ENCODE measurements at regions of chr3 and their contacts with region 1.

Region 1: DNA sequence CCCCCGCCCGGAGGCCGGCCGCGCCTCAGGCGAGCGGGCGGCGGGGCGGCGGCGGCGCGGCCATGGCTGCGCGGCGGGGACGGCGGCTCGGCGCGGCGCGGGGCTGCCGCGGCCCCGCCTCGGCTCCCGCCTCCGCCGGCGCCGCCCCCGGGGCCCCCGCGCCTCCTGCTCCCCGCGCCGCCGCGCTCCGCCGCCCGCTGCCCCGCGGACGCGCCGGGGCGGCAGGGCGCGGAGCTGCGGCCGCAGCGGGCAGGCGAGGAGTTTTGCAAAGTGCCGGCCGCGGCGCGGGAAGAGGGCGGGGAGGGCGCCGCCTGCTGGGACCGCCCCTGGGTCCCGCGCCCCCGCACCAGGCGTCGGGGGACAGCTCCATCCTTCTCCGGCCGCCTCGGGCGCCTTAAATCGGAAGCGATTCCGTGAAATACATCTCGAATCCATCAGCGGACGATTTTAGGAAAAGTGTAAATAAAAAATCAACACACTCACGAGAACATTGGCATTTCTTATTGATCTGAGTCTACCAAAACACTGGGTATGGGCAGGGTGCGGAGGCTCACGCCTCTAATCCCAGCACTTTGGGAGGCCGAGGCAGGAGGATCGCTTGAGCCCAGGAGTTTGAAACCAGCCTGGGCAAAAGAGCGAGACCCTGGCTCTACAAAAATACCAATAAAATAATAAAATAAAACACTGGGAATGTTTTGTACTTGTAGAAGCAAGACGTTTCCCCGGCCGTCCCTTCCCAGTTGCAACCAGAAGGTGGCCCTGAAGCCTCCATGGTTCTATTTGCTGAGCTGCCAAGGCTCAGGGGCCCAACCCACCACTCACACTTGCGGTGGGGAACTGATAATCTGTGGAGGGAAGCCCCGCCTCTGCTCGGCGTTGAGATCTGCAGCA is 136.9 kb downstream of the NUP210 start:
- DNase-seq: peak; percentile 5
- H3K4me3 ChIP-seq: peak overlapping the region in 1 of 3 experiments; percentile 38
- H3K27ac ChIP-seq: no peak overlapping the region
- H3K4me1 ChIP-seq: peaks cover 9% of the 10 kb centered on the region
- H3K27me3 ChIP-seq: peaks cover 14% of the 10 kb centered on the region
- CTCF ChIP-seq: peak in 1 of 2 donors; percentile 37

Region 2: GRCh38 chr3:13324835-13325501 is 41.7 kb after region 1 on chr3:
- CTCF ChIA-PET with region 1: no interaction called
- dilution Hi-C with region 1: no loop called
- in situ Hi-C with region 1: no loop called
- intact Hi-C with region 1: no loop called
- DNase-seq: no peak
- H3K4me3 ChIP-seq: no peak overlapping the region
- H3K27ac ChIP-seq: no peak overlapping the region
- H3K4me1 ChIP-seq: no peaks in the 10 kb centered on the region
- H3K27me3 ChIP-seq: no peaks in the 10 kb centered on the region
- CTCF ChIP-seq: no peak

Region 3: DNA sequence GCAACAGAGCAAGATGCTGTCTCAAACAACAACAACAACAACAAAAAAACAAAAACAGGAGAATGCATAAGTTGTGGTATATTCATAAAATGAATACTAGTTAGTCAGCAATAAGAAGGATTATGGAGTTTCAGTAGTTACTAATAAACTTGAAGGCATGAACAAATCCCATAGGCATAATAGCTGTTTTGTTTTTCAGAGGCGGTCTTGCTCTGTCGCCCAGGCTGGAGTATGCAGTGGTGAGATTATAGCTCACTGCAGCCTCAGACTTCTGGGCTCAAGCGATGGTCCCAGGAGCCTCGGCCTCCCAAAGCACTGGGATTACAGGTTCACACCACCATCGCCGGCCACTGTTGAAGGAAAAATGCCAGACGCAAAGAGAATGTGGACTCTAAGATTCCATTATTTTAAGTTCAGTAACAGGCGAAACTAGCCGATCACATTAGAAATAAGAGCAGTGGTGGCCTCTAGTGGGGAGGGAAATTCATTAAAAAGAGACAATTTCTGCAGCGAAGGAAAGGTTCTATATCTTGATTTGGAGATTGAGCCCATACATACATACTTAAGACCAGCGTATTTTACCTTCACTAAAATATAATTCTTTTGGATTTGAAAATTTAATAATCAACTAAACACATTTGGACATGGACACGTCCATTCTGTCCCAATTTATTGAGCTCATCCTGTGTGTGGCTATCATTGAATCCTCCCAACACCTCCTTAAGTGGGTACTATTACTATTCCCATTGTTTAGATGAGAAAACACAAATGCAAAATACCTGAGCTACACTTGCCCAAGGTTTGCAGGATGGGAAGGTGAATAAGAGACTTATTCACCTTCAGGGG is 169.5 kb after region 1 on chr3:
- CTCF ChIA-PET with region 1: no interaction called
- dilution Hi-C with region 1: no loop called
- in situ Hi-C with region 1: no loop called
- intact Hi-C with region 1: loop called (anchors 1 kb)
- DNase-seq: peak; percentile 38
- H3K4me3 ChIP-seq: no peak overlapping the region
- H3K27ac ChIP-seq: peak overlapping the region; percentile 72
- H3K4me1 ChIP-seq: peaks cover 10% of the 10 kb centered on the region
- H3K27me3 ChIP-seq: no peaks in the 10 kb centered on the region
- CTCF ChIP-seq: peak; percentile 63 to 70

Region 4: GRCh38 chr3:14097616-14098391 is 814.6 kb after region 1 on chr3:
- CTCF ChIA-PET with region 1: no interaction called
- dilution Hi-C with region 1: no loop called
- in situ Hi-C with region 1: no loop called
- intact Hi-C with region 1: no loop called
- DNase-seq: no peak
- H3K4me3 ChIP-seq: no peak overlapping the region
- H3K27ac ChIP-seq: no peak overlapping the region
- H3K4me1 ChIP-seq: no peaks in the 10 kb centered on the region
- H3K27me3 ChIP-seq: no peaks in the 10 kb centered on the region
- CTCF ChIP-seq: no peak